CD8-positive, alpha-beta memory T cell (primary cell): ENCODE measurements at regions of chr9 and their contacts with region 1.

Region 1: DNA sequence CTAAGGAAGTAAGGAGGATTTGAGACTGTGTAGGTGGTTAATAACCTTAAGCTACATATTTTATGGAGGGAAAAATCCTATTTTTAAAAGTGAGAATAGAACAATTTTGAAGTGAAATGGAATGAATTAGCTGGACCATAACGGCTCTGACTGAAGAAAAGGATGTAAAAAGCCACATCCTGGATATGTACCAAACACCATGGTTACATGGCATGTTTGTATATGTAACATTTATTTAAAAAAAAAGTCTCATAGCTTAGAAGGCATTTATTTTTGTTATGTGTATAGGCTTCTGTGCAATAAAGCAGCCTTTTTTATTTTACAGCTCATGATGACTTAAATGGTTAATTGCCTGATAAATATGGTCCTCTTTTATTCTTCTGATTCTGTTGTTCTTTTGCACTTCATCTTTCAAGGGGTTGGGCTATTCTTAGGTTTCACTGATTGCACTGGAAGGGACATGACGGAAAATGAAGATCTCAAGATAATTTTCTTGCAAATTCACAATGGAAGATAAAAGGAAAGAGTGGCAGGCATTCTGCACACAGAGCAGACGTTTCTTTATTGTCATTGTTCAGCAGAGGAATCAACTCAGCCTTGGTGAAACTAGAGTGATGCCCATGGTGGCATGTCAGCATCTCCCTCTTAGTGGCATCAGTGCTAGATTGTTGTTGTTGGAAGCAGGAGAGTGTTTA is 63.1 kb downstream of the DOCK8 start:
- DNase-seq: peak in 3 of 5 donors; percentile 44 to 77 (median 75)
- H3K4me3 ChIP-seq: peak overlapping the region; percentile 19
- H3K4me3 Mint-ChIP-seq: no peak overlapping the region
- H3K27ac ChIP-seq: peak overlapping the region; percentile 86
- H3K27ac Mint-ChIP-seq: no peak overlapping the region
- H3K4me1 ChIP-seq: peaks cover 84% of the 10 kb centered on the region
- H3K4me1 Mint-ChIP-seq: peaks cover 39 to 43% (median 42%) of the 10 kb centered on the region in 3 donors
- H3K27me3 ChIP-seq: no peaks in the 10 kb centered on the region
- H3K27me3 Mint-ChIP-seq: no peaks in the 10 kb centered on the region

Region 2: GRCh38 chr9:214648-215493 is 62.9 kb before region 1 on chr9 and contains the start of gene DOCK8:
- CTCF ChIA-PET with region 1: interaction called, 17 read pairs
- POLR2A ChIA-PET with region 1: interaction called, 32 read pairs
- DNase-seq: peak; percentile 27 to 75 (median 51)
- H3K4me3 ChIP-seq: peak within 1 kb of the TSS; percentile 69
- H3K4me3 Mint-ChIP-seq: peak within 1 kb of the TSS; percentile 83 to 95 (median 89)
- H3K27ac ChIP-seq: peak within 1 kb of the TSS; percentile 57
- H3K27ac Mint-ChIP-seq: peak within 1 kb of the TSS in 7 of 8 donors; percentile 17 to 88 (median 82)
- H3K4me1 ChIP-seq: peaks cover 13% of the 10 kb centered on the region
- H3K4me1 Mint-ChIP-seq: peaks cover 15 to 33% (median 24%) of the 10 kb centered on the region in 3 donors
- H3K27me3 ChIP-seq: no peaks in the 10 kb centered on the region
- H3K27me3 Mint-ChIP-seq: no peaks in the 10 kb centered on the region
- total RNA-seq, gene DOCK8: 136 to 141 TPM